ENCODE measurements at regions of chr20 and their contacts with region 1.

Region 1: GRCh38 chr20:33731693-33732165 is at the start of gene ZNF341:
- DNase-seq: peak in 7 of 9 donors; percentile 84 to 92 (median 88)
- ATAC-seq: peak; percentile 92
- H3K4me3 ChIP-seq: peak within 1 kb of the TSS; percentile 84
- H3K4me3 Mint-ChIP-seq: peak within 1 kb of the TSS; percentile 82 to 97 (median 90)
- H3K27ac ChIP-seq: peak within 1 kb of the TSS; percentile 75
- H3K27ac Mint-ChIP-seq: peak within 1 kb of the TSS; percentile 90 to 98 (median 97)
- H3K4me1 ChIP-seq: peaks cover 3 to 18% of the 10 kb centered on the region in 2 donors
- H3K4me1 Mint-ChIP-seq: peaks cover 12 to 36% (median 20%) of the 10 kb centered on the region in 7 donors
- H3K27me3 ChIP-seq: no peaks in the 10 kb centered on the region
- H3K27me3 Mint-ChIP-seq: peaks cover 0 to 3% (median 0%) of the 10 kb centered on the region in 5 donors
- total RNA-seq, gene ZNF341: 3.5 to 6.1 (median 5.5) TPM

Region 2: GRCh38 chr20:33460711-33461110 is 271.0 kb before region 1 on chr20:
- CTCF ChIA-PET with region 1: interaction called, 3 read pairs
- POLR2A ChIA-PET with region 1: no interaction called
- intact Hi-C with region 1: loop called (anchors 1 kb)
- DNase-seq: no peak
- ATAC-seq: no peak
- H3K4me3 ChIP-seq: no peak overlapping the region
- H3K4me3 Mint-ChIP-seq: no peak overlapping the region
- H3K27ac ChIP-seq: no peak overlapping the region
- H3K27ac Mint-ChIP-seq: no peak overlapping the region
- H3K4me1 ChIP-seq: no peaks in the 10 kb centered on the region
- H3K4me1 Mint-ChIP-seq: peaks cover 0 to 4% (median 0%) of the 10 kb centered on the region in 7 donors
- H3K27me3 ChIP-seq: no peaks in the 10 kb centered on the region
- H3K27me3 Mint-ChIP-seq: no peaks in the 10 kb centered on the region

Region 3: DNA sequence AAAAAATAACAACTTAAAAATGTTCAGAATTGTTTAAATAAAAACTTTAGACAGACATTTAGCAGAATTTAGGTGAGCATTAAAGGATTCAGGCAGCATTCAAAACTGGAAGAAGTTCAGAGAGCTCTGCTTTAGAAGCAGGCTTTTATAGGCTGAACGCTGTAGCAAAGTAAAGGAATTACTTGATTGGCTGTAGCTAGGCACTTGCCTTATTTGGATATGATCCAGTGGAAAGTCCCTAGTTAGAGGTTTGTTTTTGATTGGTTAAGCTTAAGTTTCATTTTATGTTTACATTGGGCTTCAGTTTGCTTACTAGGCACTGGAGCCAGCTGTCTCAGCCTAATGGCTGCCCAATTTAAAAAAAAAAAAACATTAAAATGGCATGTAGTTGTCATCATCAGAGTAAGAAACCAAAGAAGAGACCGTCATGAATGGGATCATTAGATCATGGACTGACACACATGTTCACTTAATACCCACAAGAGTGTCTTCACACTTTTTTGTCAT is 176.8 kb before region 1 on chr20:
- CTCF ChIA-PET with region 1: no interaction called
- POLR2A ChIA-PET with region 1: no interaction called
- intact Hi-C with region 1: loop called in 1 of 2 experiments (anchors 1 kb)
- DNase-seq: peak in 7 of 9 donors; percentile 72 to 92 (median 88)
- ATAC-seq: peak; percentile 98
- H3K4me3 ChIP-seq: peak overlapping the region; percentile 3
- H3K4me3 Mint-ChIP-seq: peak overlapping the region; percentile 51 to 83 (median 75)
- H3K27ac ChIP-seq: peak overlapping the region; percentile 81
- H3K27ac Mint-ChIP-seq: peak overlapping the region; percentile 90 to 98 (median 95)
- H3K4me1 ChIP-seq: peaks cover 16% of the 10 kb centered on the region in 2 donors
- H3K4me1 Mint-ChIP-seq: peaks cover 15 to 49% (median 39%) of the 10 kb centered on the region in 7 donors
- H3K27me3 ChIP-seq: no peaks in the 10 kb centered on the region
- H3K27me3 Mint-ChIP-seq: no peaks in the 10 kb centered on the region

Region 4: GRCh38 chr20:33686100-33686983 is 45.4 kb before region 1 on chr20 and contains the start of gene E2F1:
- CTCF ChIA-PET with region 1: no interaction called
- POLR2A ChIA-PET with region 1: interaction called, 7 read pairs
- intact Hi-C with region 1: loop called (anchors 1 kb)
- DNase-seq: peak; percentile 85 to 98 (median 90)
- ATAC-seq: peak; percentile 98
- H3K4me3 ChIP-seq: peak within 1 kb of the TSS; percentile 55
- H3K4me3 Mint-ChIP-seq: peak within 1 kb of the TSS; percentile 74 to 95 (median 84)
- H3K27ac ChIP-seq: peak within 1 kb of the TSS; percentile 59
- H3K27ac Mint-ChIP-seq: peak within 1 kb of the TSS; percentile 6 to 95 (median 84)
- H3K4me1 ChIP-seq: peaks cover 3 to 27% of the 10 kb centered on the region in 2 donors
- H3K4me1 Mint-ChIP-seq: peaks cover 11 to 72% (median 38%) of the 10 kb centered on the region in 7 donors
- H3K27me3 ChIP-seq: no peaks in the 10 kb centered on the region
- H3K27me3 Mint-ChIP-seq: no peaks in the 10 kb centered on the region
- total RNA-seq, gene E2F1: 0.98 to 61.6 (median 1.6) TPM

Region 5: GRCh38 chr20:34129518-34130162 is 397.9 kb after region 1 on chr20:
- CTCF ChIA-PET with region 1: no interaction called
- POLR2A ChIA-PET with region 1: no interaction called
- intact Hi-C with region 1: loop called in 1 of 2 experiments (anchors 1 kb)
- DNase-seq: peak; percentile 36 to 79 (median 67)
- ATAC-seq: peak; percentile 99
- H3K4me3 ChIP-seq: no peak overlapping the region
- H3K4me3 Mint-ChIP-seq: peak overlapping the region in 8 of 10 donors; percentile 18 to 73 (median 46)
- H3K27ac ChIP-seq: no peak overlapping the region
- H3K27ac Mint-ChIP-seq: no peak overlapping the region
- H3K4me1 ChIP-seq: no peaks in the 10 kb centered on the region
- H3K4me1 Mint-ChIP-seq: peaks cover 0 to 8% (median 4%) of the 10 kb centered on the region in 7 donors
- H3K27me3 ChIP-seq: no peaks in the 10 kb centered on the region
- H3K27me3 Mint-ChIP-seq: peaks cover 0 to 23% (median 7%) of the 10 kb centered on the region in 5 donors

Region 6: GRCh38 chr20:34150306-34151000 is 418.7 kb after region 1 on chr20:
- CTCF ChIA-PET with region 1: no interaction called
- POLR2A ChIA-PET with region 1: no interaction called
- intact Hi-C with region 1: no loop called
- DNase-seq: no peak
- ATAC-seq: no peak
- H3K4me3 ChIP-seq: no peak overlapping the region
- H3K4me3 Mint-ChIP-seq: no peak overlapping the region
- H3K27ac ChIP-seq: no peak overlapping the region
- H3K27ac Mint-ChIP-seq: no peak overlapping the region
- H3K4me1 ChIP-seq: no peaks in the 10 kb centered on the region
- H3K4me1 Mint-ChIP-seq: no peaks in the 10 kb centered on the region
- H3K27me3 ChIP-seq: no peaks in the 10 kb centered on the region
- H3K27me3 Mint-ChIP-seq: peaks cover 0 to 16% (median 6%) of the 10 kb centered on the region in 5 donors